ENCODE measurements at regions of chr13 and their contacts with region 1.

Region 1: GRCh38 chr13:114065141-114065925 is 67.1 kb downstream of the RASA3 start:
- DNase-seq: peak; percentile 92
- H3K4me3 ChIP-seq: peak overlapping the region; percentile 53
- H3K27ac ChIP-seq: peak overlapping the region; percentile 99
- H3K27me3 ChIP-seq: no peaks in the 10 kb centered on the region
- CTCF ChIP-seq: 0 out of 2 replicates have a peak, but pooled peaks have one; percentile 4

Region 2: DNA sequence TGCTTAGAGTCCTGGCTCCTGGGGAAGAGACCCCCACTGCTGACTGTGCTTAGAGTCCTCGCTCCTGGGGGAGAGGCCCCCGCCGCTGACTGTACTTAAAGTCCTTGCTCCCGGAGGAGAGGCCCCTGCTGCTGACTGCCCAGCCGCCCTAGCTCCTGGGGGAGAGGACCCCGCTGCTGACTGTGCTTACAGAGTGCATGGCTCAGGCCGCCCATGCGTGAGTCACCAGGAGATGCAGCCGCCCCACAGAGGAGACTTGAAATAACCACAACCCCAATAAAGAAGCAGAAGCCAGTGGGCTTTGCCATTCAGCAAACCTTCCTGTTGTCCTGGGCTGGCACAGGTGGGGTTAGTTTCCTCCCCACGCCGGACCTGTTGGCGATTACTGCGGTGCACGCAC is 12.3 kb before region 1 on chr13:
- CTCF ChIA-PET with region 1: no interaction called
- POLR2A ChIA-PET with region 1: no interaction called
- DNase-seq: peak; percentile 37
- H3K4me3 ChIP-seq: no peak overlapping the region
- H3K27ac ChIP-seq: peak overlapping the region; percentile 31
- H3K27me3 ChIP-seq: no peaks in the 10 kb centered on the region
- CTCF ChIP-seq: no peak

Region 3: GRCh38 chr13:114111577-114111976 is 46.2 kb after region 1 on chr13:
- CTCF ChIA-PET with region 1: no interaction called
- POLR2A ChIA-PET with region 1: interaction called, 15 read pairs
- DNase-seq: peak; percentile 87
- H3K4me3 ChIP-seq: no peak overlapping the region
- H3K27ac ChIP-seq: peak overlapping the region; percentile 92
- H3K27me3 ChIP-seq: no peaks in the 10 kb centered on the region
- CTCF ChIP-seq: no peak

Region 4: GRCh38 chr13:114119196-114119595 is 53.9 kb after region 1 on chr13:
- CTCF ChIA-PET with region 1: no interaction called
- POLR2A ChIA-PET with region 1: interaction called, 15 read pairs
- DNase-seq: peak; percentile 85
- H3K4me3 ChIP-seq: peak overlapping the region; percentile 37
- H3K27ac ChIP-seq: peak overlapping the region; percentile 98
- H3K27me3 ChIP-seq: no peaks in the 10 kb centered on the region
- CTCF ChIP-seq: no peak

Region 5: DNA sequence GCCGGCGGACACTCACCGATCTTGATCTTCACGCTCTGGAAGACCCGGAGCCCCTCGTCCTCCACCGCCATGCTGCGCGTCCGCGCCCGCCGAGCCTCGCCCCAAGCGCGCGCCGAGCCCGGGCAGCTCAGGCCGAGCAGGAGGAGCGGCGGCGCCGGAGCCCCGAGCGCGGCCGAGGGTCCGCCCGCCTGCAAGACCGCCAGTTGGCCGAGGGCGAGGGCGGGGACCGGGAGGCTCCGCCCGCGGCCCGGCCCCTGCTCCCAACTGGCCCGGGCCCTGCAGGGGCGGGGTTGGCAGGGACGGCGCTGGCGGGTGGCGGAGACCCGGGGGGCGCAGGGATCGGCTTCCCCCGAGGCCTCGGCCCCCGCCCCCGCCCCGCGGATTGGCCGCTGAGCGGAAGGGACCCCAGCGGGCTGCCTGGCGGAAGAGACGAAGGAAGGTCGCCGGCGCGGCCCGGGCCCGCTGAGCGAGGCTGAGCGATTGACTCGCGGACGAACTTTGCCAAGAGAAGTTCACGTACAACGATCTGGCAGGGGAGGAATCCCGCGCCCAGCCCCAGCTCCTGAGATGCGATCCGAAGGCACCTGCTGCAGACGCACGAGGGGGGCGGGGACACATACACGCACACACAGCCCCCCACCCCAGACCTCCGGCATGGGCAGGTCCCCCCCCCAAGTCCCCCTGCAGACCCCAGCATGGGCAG is 67.2 kb after region 1 on chr13 and contains the start of gene RASA3:
- CTCF ChIA-PET with region 1: no interaction called
- POLR2A ChIA-PET with region 1: interaction called, 13 read pairs
- DNase-seq: no peak
- H3K4me3 ChIP-seq: peak within 1 kb of the TSS; percentile 93
- H3K27ac ChIP-seq: peak within 1 kb of the TSS; percentile 96
- H3K27me3 ChIP-seq: no peaks in the 10 kb centered on the region
- CTCF ChIP-seq: no peak
- polyA plus RNA-seq, gene RASA3: 25.2 and 26.8 TPM in 2 replicates